GM10248 (cell line): ENCODE measurements at regions of chr7 and their contacts with region 1.

Region 1: DNA sequence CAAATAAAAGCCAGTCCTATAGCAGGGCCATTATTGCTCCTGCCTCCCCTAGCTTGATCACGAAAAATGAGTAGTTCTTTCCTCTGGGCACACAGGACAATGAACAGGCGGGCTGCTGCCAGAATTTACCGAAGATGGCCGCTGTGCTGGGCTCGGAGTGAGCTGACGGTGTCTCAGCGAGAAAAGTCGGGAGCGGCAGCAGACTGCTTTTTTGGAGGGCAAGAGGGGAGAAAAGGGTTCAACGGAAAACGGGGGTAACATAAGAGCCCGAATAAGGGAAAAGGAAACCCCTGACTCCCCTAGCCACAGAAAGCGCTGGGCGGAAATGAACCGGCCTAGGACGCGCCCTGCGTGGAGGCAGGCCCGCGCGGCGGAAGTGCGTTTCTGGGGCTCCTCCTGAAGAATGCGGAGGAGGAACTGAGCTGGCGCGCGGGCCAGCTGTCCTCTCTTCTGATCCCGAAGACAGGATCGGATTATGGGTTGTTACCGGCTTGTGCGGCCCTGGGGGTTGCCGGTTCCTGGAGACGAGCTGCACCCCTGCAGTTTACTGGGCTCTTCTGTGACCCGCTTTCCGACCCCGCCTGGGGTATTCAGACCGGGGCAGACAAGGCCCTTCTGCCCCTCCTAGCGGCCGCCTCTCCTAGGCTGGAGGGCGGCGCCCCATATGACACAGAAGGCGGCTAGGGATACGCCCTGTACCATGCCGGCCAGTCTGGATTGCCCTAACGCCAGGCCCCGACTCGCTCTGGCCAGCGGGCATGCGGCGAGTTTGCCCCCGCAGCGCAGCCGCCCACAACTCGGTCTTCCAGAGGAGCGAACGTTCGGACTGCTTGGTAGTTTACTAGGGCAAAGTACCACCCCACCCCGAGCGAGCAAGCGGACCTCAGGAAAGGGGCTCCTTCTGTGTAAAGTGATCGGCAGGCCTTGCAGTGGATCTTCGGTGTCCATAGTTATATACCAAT is 30.1 kb upstream of the KMT2E start:
- DNase-seq: peak; percentile 85
- CTCF ChIP-seq: peak; percentile 56

Region 2: GRCh38 chr7:104943502-104944343 is 40.1 kb before region 1 on chr7:
- CTCF ChIA-PET with region 1: interaction called, 33 read pairs
- POLR2A ChIA-PET with region 1: interaction called, 12 read pairs
- DNase-seq: peak; percentile 52
- CTCF ChIP-seq: no peak

Region 3: DNA sequence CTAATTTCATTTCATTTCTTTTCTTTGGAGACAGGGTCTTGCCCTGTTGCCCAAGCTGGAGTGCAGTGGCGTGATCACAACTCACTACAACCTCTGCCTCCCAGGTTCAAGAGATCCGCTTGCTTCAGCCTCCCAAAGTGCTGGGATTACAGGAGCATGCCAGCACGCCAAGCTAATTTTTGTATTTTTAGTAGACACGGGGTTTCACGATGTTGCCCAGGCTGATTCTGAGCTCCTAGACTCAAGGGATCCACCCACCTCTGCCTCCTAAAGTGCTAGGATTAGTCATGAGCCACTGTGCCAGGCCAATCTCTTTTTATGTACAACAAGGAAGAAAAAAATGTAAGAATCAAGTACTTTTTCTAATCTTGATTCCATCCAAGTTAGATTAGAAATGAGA is 19.4 kb after region 1 on chr7:
- CTCF ChIA-PET with region 1: interaction called, 173 read pairs
- POLR2A ChIA-PET with region 1: interaction called, 3 read pairs
- DNase-seq: no peak
- CTCF ChIP-seq: no peak

Region 4: DNA sequence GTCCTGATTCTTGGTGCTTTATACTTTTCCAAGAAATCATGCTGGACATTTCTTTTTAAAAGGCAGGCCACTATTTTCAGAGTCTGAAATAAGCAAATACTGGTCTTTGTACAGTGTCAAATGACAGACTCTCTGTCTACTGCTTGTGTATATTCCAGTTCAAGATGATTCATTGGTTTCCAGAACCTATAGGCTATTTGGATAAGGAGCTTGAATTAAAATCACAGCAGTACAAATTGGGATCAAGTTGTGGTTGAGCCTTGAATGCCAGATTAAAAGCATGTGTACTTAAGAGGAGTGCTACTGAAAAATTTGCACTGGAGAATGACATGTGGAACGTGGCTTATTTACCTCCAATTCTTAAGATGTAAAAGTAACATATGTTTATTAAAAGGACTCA is 40.9 kb after region 1 on chr7:
- CTCF ChIA-PET with region 1: interaction called, 22 read pairs
- POLR2A ChIA-PET with region 1: no interaction called
- DNase-seq: no peak
- CTCF ChIP-seq: no peak

Region 5: DNA sequence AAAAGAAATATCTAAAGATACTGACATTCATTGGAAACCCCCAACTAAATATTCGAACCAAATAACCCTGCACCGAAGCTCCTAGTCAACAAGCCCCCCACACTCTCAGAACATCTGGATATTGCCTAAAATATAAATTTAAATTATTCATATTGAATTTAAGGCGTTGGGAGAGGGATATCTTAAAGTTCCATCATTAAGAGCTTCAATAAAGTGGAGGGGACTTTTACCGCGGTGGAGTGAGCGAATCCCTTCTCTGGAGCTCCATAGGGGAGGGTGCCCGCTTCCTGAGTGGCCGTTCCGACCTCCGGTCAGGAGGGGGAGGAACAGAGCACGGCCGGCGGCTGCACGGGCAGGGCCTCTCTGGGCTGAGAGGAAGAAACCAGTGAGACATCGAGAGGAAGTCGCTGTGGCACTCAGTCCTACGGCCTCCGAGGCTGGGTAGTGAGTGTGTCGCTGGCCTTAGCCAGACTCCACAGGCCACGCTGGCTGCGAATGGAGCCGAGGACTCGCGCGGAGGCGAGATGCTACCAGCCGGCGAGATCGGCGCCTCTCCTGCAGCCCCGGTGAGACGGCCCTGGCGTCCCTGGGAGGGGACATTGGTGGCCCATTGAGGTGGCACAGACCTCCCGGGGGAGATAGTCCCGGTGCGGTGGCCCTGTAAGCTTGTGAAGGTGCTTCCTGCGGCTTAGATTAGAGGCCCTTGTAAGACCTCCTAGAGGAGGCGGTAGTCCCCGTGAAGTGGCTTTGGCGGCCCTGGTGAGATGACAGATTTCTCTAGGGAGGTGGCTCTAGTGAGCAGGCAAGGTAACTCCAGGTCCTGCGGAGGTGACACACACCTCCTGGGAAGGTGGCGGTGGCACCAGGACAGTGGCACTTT is 548.2 kb after region 1 on chr7 and contains the start of gene RINT1:
- CTCF ChIA-PET with region 1: interaction called, 12 read pairs
- POLR2A ChIA-PET with region 1: no interaction called
- DNase-seq: peak; percentile 91
- CTCF ChIP-seq: peak; percentile 89